Heart right ventricle (tissue), 16 donors: ENCODE measurements at regions of chr4 and their contacts with region 1.

Region 1: DNA sequence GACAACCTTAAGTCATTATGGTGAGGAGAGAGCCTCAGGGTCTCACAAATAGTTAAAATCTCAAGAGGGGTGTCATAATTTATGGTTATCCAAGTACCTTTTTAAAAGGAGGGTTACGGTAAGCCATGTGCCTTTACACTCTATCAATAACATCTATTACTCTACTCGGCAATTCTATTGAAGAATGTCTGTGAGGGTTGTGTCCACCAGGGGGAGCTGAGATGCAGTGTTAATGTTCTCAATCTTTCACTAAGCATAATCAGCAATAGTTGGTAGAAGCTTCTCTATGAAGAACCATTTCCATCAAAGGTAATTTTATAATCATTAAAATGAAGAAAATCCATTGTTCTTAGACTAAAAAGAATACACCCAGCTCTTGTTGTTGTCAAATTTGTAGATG is 457.4 kb downstream of the CENPC start:
- DNase-seq: peak in 1 of 2 donors; percentile 7
- ATAC-seq: no peak
- H3K4me3 ChIP-seq: no peak overlapping the region
- H3K27ac ChIP-seq: no peak overlapping the region
- H3K4me1 ChIP-seq: no peaks in the 10 kb centered on the region
- H3K27me3 ChIP-seq: no peaks in the 10 kb centered on the region
- CTCF ChIP-seq: peak in 8 of 9 donors; percentile 9 to 61 (median 46)

Region 2: GRCh38 chr4:67198727-67199126 is 110.8 kb after region 1 on chr4:
- intact Hi-C with region 1: no loop called
- DNase-seq: no peak
- ATAC-seq: peak in 4 of 8 donors; percentile 33 to 59 (median 54)
- H3K4me3 ChIP-seq: no peak overlapping the region
- H3K27ac ChIP-seq: no peak overlapping the region
- H3K4me1 ChIP-seq: no peaks in the 10 kb centered on the region
- H3K27me3 ChIP-seq: no peaks in the 10 kb centered on the region
- CTCF ChIP-seq: peak in 6 of 9 donors; percentile 18 to 36 (median 34)

Region 3: DNA sequence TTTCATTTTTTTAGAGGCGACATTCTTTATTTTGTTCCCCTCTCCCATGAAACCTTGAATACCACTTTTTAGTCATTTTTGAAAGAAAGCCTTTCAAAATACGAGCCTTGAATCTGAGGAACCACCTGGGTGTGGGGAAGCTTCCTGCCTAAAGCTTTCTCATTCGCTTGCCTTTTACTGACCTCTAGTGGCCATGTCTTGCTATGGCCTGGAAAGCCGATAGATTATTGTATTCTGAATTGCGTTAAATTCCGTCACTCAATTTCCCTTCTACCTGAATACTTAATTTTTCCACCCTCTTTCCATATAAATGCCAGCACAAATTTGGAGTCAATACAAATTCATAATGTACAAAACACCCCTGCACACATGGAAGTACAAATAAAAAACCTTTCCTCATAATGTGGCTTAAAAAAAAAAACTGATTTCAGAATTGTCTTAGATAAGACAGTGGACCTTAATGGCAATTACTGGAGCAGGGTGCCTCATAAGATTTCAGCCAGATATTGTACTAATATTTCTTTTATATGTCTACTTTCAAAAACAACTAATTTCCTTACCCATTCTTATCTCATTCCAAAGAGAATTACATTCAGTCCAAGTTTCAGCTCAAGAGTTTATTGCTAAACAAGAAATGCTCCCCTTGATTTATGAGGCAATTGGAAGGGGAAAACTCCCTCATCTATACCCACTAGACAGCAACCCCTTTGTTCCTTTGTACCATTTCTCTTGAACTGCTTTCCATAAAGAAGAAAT is 239.5 kb after region 1 on chr4:
- intact Hi-C with region 1: loop called in 4 of 10 experiments (anchors 5 to 10 kb)
- DNase-seq: peak in 1 of 2 donors; percentile 40
- ATAC-seq: peak in 4 of 8 donors; percentile 62 to 67 (median 65)
- H3K4me3 ChIP-seq: no peak overlapping the region
- H3K27ac ChIP-seq: no peak overlapping the region
- H3K4me1 ChIP-seq: no peaks in the 10 kb centered on the region
- H3K27me3 ChIP-seq: peaks cover 0 to 12% (median 0%) of the 10 kb centered on the region in 7 donors
- CTCF ChIP-seq: peak; percentile 71 to 88 (median 85)